ENCODE measurements at regions of chr4 and their contacts with region 1.

Region 1: DNA sequence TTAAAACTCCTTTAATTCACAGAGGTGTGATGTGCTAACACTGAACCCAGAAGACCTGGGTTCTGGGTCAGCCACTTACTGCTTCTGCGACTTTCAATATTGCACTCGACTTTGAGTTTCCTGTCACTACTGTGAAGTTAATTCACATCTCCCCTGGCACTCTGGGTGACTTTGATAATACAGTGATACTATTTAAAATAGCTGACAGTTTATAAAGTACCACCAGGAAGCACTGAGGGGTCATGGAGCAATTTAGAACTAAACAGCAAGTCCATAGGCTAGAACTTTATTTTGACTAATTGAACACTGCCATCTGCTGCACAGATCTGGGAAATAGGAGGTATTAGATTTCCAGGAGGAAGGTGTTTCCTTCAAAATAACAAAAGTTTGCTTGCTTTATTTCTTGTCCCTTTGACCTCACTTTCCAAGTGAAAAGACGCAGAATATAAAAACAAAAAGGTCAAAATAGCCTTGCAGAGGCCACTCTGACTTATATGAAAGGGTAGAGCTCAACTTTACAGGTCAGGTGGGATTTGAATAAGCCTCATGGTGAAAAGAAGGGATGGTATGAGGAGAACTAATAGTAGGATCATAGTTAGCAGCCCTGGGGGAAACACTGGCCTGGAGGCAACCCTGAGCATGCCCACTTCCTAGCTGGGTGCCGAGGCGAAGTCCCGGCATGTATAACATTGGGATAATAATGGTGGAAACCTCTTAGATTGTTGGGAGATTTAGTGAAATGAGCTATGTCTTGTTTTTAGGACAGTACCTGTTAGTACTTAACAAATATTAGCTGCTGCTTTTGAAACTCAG is 53.4 kb downstream of the ZNF518B start:
- DNase-seq: peak; percentile 7
- ATAC-seq: no peak
- H3K4me3 Mint-ChIP-seq: no peak overlapping the region
- H3K27ac Mint-ChIP-seq: no peak overlapping the region
- H3K4me1 Mint-ChIP-seq: no peaks in the 10 kb centered on the region
- H3K27me3 Mint-ChIP-seq: no peaks in the 10 kb centered on the region

Region 2: DNA sequence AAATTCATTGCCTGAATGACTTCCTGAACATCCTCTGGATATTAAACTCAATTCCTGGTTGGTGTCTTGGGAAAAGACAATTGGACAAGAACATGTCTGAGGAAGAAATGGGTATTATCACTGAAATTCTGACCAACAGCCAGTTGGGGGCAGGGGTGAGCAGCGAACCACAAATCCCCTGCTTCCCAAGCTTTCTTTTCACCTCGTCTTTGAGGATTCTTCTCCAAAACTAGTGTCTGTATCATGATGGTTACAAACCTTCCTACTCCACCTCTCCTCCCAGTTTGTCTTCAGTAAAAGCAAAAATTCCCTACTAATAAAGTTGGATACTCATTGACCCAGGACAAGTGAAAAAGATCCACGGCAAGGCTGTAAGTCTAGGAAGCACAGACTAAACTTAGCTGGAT is 239.0 kb before region 1 on chr4:
- CTCF ChIA-PET with region 1: interaction called, 6 read pairs
- POLR2A ChIA-PET with region 1: no interaction called
- intact Hi-C with region 1: loop called in 1 of 2 experiments (anchors 2 kb)
- DNase-seq: peak; percentile 50
- ATAC-seq: no peak
- H3K4me3 Mint-ChIP-seq: no peak overlapping the region
- H3K27ac Mint-ChIP-seq: no peak overlapping the region
- H3K4me1 Mint-ChIP-seq: peaks cover 12% of the 10 kb centered on the region
- H3K27me3 Mint-ChIP-seq: no peaks in the 10 kb centered on the region

Region 3: DNA sequence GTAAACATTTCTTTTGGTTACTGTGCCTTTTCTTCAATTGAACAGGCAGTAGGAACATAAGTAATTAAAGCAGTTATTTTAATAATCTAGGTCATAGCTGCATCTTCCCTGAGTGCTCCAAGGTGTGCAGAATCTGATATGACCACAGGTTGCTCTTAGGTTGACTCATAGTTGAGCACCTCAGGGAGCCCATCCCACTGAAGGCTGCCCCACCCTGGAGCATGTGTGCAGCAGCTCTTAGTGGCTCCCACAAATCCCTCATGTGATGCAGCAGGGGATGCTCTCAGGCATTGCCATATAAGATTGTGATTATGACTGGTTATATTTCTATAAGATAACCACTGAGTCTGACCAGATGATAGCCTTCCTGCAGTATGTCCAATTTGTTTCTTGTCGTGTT is 18.9 kb before region 1 on chr4:
- CTCF ChIA-PET with region 1: interaction called, 5 read pairs
- POLR2A ChIA-PET with region 1: no interaction called
- intact Hi-C with region 1: loop called (anchors 1 kb)
- DNase-seq: no peak
- ATAC-seq: no peak
- H3K4me3 Mint-ChIP-seq: no peak overlapping the region
- H3K27ac Mint-ChIP-seq: no peak overlapping the region
- H3K4me1 Mint-ChIP-seq: no peaks in the 10 kb centered on the region
- H3K27me3 Mint-ChIP-seq: no peaks in the 10 kb centered on the region